ENCODE measurements at regions of chr11 and their contacts with region 1.

Region 1: DNA sequence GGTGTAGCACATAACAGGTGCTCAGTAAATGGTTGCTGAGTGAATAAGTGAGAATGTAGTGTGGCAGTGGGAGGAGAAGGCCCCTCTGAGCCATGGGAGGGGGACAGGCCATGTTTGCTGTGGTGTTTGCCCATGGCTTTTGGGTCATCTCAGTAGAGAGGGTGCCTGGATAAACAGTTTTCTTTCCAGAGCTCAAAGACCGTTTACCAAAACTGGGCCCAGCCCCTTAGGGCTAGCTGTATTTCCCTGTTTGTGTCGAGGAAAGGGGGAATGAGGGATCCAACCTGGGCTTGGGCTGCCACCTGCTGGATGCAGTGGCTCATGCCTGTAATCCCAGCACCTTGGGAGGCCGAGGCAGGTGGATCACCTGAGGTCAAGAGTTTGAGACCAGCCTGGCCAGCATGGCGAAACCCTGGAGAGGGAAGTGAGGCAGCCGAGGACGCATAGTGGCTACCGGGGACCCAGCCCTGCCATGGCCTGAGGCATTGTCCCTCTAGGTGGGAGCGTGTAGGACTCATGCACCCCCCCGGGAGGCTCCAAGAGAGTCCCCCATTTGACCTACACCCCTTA is 8.7 kb upstream of the LTO1 start:
- DNase-seq: peak in 1 of 2 experiments; percentile 42
- H3K4me3 ChIP-seq: no peak overlapping the region
- H3K4me1 ChIP-seq: no peaks in the 10 kb centered on the region
- H3K27me3 ChIP-seq: no peaks in the 10 kb centered on the region

Region 2: GRCh38 chr11:69918938-69919650 is 235.2 kb after region 1 on chr11:
- in situ Hi-C with region 1: loop called (anchors 10 kb)
- DNase-seq: peak; percentile 43 to 90
- H3K4me3 ChIP-seq: no peak overlapping the region
- H3K4me1 ChIP-seq: no peaks in the 10 kb centered on the region
- H3K27me3 ChIP-seq: peaks cover 15% of the 10 kb centered on the region

Region 3: DNA sequence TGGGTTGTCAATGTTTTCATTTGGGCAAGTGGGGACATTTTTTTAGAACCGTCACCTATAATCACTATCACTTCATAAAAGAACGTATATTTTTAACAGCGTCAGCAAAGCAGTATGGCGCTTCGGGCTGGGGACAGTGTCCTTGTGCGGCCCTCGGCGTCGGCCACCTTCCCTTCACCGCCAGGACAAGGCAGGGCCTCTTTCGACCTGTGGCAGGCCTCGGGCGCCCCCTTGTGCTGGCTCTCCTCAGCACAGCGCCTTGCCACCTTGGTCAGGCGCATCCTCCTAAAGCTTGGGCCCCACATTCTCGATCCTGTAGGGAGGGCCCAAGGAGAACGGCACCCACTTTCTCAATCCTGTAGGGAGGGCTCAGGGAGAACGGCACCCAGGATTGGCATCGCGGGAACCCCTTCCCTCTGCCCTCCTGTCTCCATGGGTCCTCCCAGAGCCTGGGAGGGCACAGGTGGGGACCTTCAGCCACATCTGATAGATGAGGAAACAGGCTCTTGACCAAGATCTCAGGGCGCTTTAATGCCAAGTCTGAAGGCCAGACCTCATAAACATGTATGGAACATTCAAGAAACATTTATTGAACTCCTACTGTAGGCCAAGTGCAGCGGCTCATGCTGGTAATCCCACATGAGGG is 507.8 kb after region 1 on chr11:
- in situ Hi-C with region 1: loop called (anchors 5 kb)
- DNase-seq: peak; percentile 48 to 91
- H3K4me3 ChIP-seq: no peak overlapping the region
- H3K4me1 ChIP-seq: no peaks in the 10 kb centered on the region
- H3K27me3 ChIP-seq: no peaks in the 10 kb centered on the region; the same call in 1 of the 2 replicates